Left colon (tissue), 2 donors: ENCODE measurements at regions of chr15 and their contacts with region 1.

Region 1: GRCh38 chr15:47196057-47196456 is 521.2 kb upstream of the SEMA6D start:
- DNase-seq: peak; percentile 63 to 70
- ATAC-seq: peak; percentile 100

Region 2: GRCh38 chr15:47129033-47129432 is 67.0 kb before region 1 on chr15:
- intact Hi-C with region 1: no loop called
- DNase-seq: peak in 1 of 2 donors; percentile 31
- ATAC-seq: peak; percentile 98

Region 3: GRCh38 chr15:48285329-48286214 is 1089.5 kb after region 1 on chr15:
- intact Hi-C with region 1: loop called in 1 of 2 experiments (anchors 10 kb)
- DNase-seq: peak; percentile 33 to 38
- ATAC-seq: peak; percentile 93